Calu3 (cell line): ENCODE measurements at regions of chr11 and their contacts with region 1.

Region 1: GRCh38 chr11:72430741-72431570 is 3.4 kb downstream of the CLPB start:
- DNase-seq: peak; percentile 41
- H3K4me3 Mint-ChIP-seq: no peak overlapping the region
- H3K27ac Mint-ChIP-seq: no peak overlapping the region
- H3K4me1 Mint-ChIP-seq: peaks cover 21% of the 10 kb centered on the region
- H3K27me3 Mint-ChIP-seq: no peaks in the 10 kb centered on the region
- CTCF ChIP-seq: peak; percentile 70

Region 2: DNA sequence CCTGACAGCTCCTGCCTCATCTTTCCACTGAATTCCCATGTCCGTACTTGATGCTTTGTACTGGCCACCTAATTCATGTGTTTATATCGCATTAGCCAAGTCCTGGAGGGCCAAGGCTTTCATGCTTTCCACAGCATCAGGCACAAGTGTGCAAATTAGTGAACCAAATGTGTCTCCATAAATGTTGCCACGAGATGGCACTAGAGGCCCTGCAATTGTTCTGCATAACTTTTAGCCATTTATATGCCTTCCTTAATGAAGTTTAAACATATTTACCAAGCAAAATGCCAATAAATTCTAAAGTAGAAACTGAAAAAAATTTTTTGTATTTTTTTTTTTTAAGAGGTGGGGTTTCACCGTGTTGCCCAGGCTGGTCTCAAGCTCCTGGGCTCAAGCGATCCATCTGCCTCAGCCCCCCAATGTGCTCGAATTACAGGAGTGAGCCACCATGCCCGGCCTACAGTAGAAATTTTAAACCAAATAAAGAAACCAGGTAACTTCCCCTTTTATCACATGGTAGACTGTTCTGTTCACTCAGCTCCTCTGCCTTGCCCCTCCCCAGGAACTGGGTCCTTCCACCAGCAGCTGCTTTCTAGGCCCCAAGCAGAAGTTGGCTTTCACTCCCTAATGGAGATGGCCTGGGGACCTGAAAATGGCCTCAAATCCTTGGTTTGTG is 453.1 kb before region 1 on chr11:
- CTCF ChIA-PET with region 1: no interaction called
- intact Hi-C with region 1: loop called (anchors 5 kb)
- DNase-seq: peak; percentile 59
- H3K4me3 Mint-ChIP-seq: no peak overlapping the region
- H3K27ac Mint-ChIP-seq: no peak overlapping the region
- H3K4me1 Mint-ChIP-seq: no peaks in the 10 kb centered on the region
- H3K27me3 Mint-ChIP-seq: no peaks in the 10 kb centered on the region
- CTCF ChIP-seq: peak; percentile 42

Region 3: GRCh38 chr11:72179804-72180396 is 251.1 kb before region 1 on chr11:
- CTCF ChIA-PET with region 1: interaction called, 16 read pairs
- intact Hi-C with region 1: no loop called
- DNase-seq: no peak
- H3K4me3 Mint-ChIP-seq: no peak overlapping the region
- H3K27ac Mint-ChIP-seq: no peak overlapping the region
- H3K4me1 Mint-ChIP-seq: peaks cover 12% of the 10 kb centered on the region
- H3K27me3 Mint-ChIP-seq: peaks cover 15% of the 10 kb centered on the region
- CTCF ChIP-seq: no peak

Region 4: GRCh38 chr11:72352859-72353551 is 78.0 kb before region 1 on chr11:
- CTCF ChIA-PET with region 1: interaction called, 11 read pairs
- intact Hi-C with region 1: no loop called
- DNase-seq: no peak
- H3K4me3 Mint-ChIP-seq: no peak overlapping the region
- H3K27ac Mint-ChIP-seq: no peak overlapping the region
- H3K4me1 Mint-ChIP-seq: no peaks in the 10 kb centered on the region
- H3K27me3 Mint-ChIP-seq: no peaks in the 10 kb centered on the region
- CTCF ChIP-seq: no peak

Region 5: GRCh38 chr11:72413914-72414628 is 16.9 kb before region 1 on chr11:
- CTCF ChIA-PET with region 1: interaction called, 15 read pairs
- intact Hi-C with region 1: no loop called
- DNase-seq: peak; percentile 86
- H3K4me3 Mint-ChIP-seq: no peak overlapping the region
- H3K27ac Mint-ChIP-seq: no peak overlapping the region
- H3K4me1 Mint-ChIP-seq: peaks cover 22% of the 10 kb centered on the region
- H3K27me3 Mint-ChIP-seq: no peaks in the 10 kb centered on the region
- CTCF ChIP-seq: peak; percentile 80

Region 6: GRCh38 chr11:72454791-72455190 is 23.8 kb after region 1 on chr11:
- CTCF ChIA-PET with region 1: no interaction called
- intact Hi-C with region 1: no loop called
- DNase-seq: no peak
- H3K4me3 Mint-ChIP-seq: no peak overlapping the region
- H3K27ac Mint-ChIP-seq: no peak overlapping the region
- H3K4me1 Mint-ChIP-seq: no peaks in the 10 kb centered on the region
- H3K27me3 Mint-ChIP-seq: peaks cover 71% of the 10 kb centered on the region
- CTCF ChIP-seq: no peak

Region 7: GRCh38 chr11:72541257-72541974 is 110.5 kb after region 1 on chr11:
- CTCF ChIA-PET with region 1: no interaction called
- intact Hi-C with region 1: no loop called
- DNase-seq: no peak
- H3K4me3 Mint-ChIP-seq: no peak overlapping the region
- H3K27ac Mint-ChIP-seq: no peak overlapping the region
- H3K4me1 Mint-ChIP-seq: no peaks in the 10 kb centered on the region
- H3K27me3 Mint-ChIP-seq: peaks cover 88% of the 10 kb centered on the region
- CTCF ChIP-seq: no peak